CD4-positive, alpha-beta memory T cell (primary cell): ENCODE measurements at regions of chr1 and their contacts with region 1.

Region 1: DNA sequence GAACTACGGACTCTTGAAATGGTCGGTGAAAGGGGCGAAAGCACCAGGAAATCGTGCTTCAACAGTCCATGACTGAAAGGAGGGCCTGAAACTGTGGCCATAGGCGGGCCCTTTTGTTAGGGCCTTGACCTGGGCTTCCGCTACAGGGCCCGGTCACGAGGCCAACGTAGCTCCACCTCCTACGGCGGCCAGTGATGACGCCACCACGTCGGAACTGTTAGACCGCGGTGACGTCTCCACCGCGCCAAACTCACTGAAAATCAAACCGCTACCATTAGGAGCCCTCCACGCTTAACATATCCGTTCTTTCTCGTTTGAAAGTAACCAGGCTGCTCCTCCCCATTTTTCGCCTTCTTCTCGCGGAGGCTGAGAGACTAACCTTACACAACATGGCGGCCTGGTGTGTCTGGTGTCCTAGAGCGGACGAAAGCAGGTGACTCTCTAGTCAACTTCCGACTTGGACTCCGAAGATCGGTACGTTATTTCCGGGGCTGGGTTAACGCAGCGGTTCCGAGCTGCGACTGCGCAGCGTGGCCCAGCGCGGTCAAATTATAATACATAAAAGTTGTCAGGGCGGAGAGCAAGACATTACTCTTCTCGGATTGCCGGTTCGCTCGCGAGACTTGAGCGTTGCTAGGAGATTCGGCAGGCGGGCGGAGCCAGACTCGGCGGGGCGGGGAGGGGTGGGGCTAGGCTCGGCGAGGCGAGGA is 376 bp upstream of the CACYBP start:
- DNase-seq: peak; percentile 97 to 99 (median 99)
- H3K4me3 ChIP-seq: peak overlapping the region; percentile 42 to 63
- H3K4me3 Mint-ChIP-seq: no peak overlapping the region
- H3K27ac ChIP-seq: peak overlapping the region; percentile 99
- H3K27ac Mint-ChIP-seq: no peak overlapping the region
- H3K4me1 ChIP-seq: peaks cover 52% of the 10 kb centered on the region
- H3K4me1 Mint-ChIP-seq: peaks cover 24 to 43% (median 37%) of the 10 kb centered on the region in 4 donors
- H3K27me3 ChIP-seq: no peaks in the 10 kb centered on the region
- H3K27me3 Mint-ChIP-seq: no peaks in the 10 kb centered on the region

Region 2: GRCh38 chr1:173476664-173477285 is 1522.6 kb before region 1 on chr1:
- CTCF ChIA-PET with region 1: no interaction called
- POLR2A ChIA-PET with region 1: interaction called, 8 read pairs
- intact Hi-C with region 1: loop called (anchors 10 kb)
- DNase-seq: peak; percentile 77 to 90 (median 84)
- H3K4me3 ChIP-seq: peak overlapping the region; percentile 93
- H3K4me3 Mint-ChIP-seq: peak overlapping the region; percentile 89 to 94 (median 91)
- H3K27ac ChIP-seq: peak overlapping the region; percentile 89
- H3K27ac Mint-ChIP-seq: peak overlapping the region; percentile 89 to 95 (median 91)
- H3K4me1 ChIP-seq: peaks cover 61% of the 10 kb centered on the region
- H3K4me1 Mint-ChIP-seq: peaks cover 38 to 68% (median 55%) of the 10 kb centered on the region in 4 donors
- H3K27me3 ChIP-seq: no peaks in the 10 kb centered on the region
- H3K27me3 Mint-ChIP-seq: no peaks in the 10 kb centered on the region

Region 3: DNA sequence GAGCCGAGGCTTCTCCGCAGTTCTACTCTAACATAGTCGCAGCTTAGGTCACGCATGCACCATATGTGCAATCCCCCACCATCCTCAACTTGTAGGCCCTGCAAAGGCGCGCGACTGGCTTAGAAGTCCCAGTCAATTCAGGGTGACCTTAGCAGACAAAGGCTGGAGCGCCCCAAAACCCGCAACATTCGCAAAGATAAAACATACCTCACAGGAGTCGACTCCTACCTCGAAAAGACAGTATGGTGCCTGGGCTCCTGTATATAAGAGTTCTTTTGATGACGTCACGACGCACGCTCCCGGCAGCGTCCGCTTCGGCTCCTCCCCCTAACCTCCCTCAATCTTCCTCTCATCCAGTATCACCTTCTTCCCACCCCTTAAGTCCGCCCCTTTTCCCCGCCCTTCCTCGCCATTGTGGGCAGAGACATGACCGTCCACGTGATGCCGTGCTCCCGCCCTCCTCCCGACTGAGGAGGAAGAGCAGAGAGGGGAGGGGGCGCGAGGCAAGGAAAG is 1131.6 kb before region 1 on chr1 and contains the start of gene GAS5:
- CTCF ChIA-PET with region 1: no interaction called
- POLR2A ChIA-PET with region 1: interaction called, 40 read pairs
- intact Hi-C with region 1: loop called (anchors 1 kb)
- DNase-seq: peak; percentile 98 to 100 (median 99)
- H3K4me3 ChIP-seq: peak within 1 kb of the TSS; percentile 71 to 79
- H3K4me3 Mint-ChIP-seq: peak within 1 kb of the TSS; percentile 95 to 99 (median 96)
- H3K27ac ChIP-seq: peak within 1 kb of the TSS; percentile 89
- H3K27ac Mint-ChIP-seq: peak within 1 kb of the TSS; percentile 94 to 99 (median 97)
- H3K4me1 ChIP-seq: peaks cover 84% of the 10 kb centered on the region
- H3K4me1 Mint-ChIP-seq: peaks cover 52 to 92% (median 63%) of the 10 kb centered on the region in 4 donors
- H3K27me3 ChIP-seq: no peaks in the 10 kb centered on the region
- H3K27me3 Mint-ChIP-seq: no peaks in the 10 kb centered on the region
- total RNA-seq, gene GAS5: 676 to 709 TPM

Region 4: DNA sequence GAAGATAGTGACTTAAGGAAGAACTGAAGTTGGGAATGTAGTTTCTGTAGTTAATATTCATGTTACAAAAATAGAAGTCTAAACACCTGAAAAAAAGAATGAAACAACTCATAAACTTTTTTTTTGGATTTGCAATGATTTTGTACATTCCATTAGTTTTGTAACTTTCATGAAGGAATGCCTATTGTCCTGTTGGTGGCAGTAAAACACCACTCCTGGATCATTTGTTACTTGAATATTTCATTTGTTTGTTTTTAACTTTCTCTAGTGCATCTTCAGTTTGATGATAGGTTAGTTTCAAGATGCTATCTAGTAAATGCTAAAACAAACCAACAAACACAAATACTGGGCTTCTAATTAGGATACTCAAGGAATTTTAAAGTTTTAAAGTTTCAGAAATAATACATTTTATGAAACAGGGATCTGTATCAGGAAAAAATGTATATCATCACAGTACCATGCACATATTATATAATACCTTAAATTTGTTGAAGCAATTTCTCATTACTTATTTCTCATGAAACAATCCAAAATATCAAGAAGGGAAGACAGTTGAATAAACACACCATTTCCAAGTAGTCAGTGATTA is 229.3 kb before region 1 on chr1:
- CTCF ChIA-PET with region 1: interaction called, 8 read pairs
- POLR2A ChIA-PET with region 1: interaction called, 10 read pairs
- intact Hi-C with region 1: loop called (anchors 1 kb)
- DNase-seq: peak; percentile 34 to 55 (median 44)
- H3K4me3 ChIP-seq: no peak overlapping the region
- H3K4me3 Mint-ChIP-seq: no peak overlapping the region
- H3K27ac ChIP-seq: no peak overlapping the region
- H3K27ac Mint-ChIP-seq: no peak overlapping the region
- H3K4me1 ChIP-seq: no peaks in the 10 kb centered on the region
- H3K4me1 Mint-ChIP-seq: peaks cover 0 to 5% (median 2%) of the 10 kb centered on the region in 4 donors
- H3K27me3 ChIP-seq: no peaks in the 10 kb centered on the region
- H3K27me3 Mint-ChIP-seq: no peaks in the 10 kb centered on the region

Region 5: DNA sequence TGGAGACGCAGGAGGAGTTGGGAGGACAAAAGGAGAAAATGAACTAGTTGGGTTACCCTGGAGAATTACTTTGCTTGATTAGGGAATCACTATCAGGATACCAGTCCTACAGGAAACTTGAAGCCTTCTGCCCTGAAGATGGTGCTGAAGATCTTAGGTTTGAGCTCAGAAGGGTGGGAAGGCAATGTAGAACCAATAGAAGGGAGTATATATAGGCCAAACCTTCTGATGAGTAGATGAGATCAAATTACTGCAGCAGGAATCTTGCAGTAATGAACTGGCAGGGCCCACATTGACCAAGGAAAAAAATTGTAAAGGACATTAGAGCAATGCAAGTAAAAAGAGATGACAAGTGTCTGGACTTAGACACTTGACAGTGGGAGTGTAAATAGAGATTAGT is 116.0 kb before region 1 on chr1:
- CTCF ChIA-PET with region 1: interaction called, 17 read pairs
- POLR2A ChIA-PET with region 1: interaction called, 14 read pairs
- intact Hi-C with region 1: loop called (anchors 1 kb)
- DNase-seq: peak in 3 of 5 donors; percentile 10 to 25 (median 12)
- H3K4me3 ChIP-seq: no peak overlapping the region
- H3K4me3 Mint-ChIP-seq: no peak overlapping the region
- H3K27ac ChIP-seq: no peak overlapping the region
- H3K27ac Mint-ChIP-seq: peak overlapping the region in 5 of 7 donors; percentile 0 to 87 (median 62)
- H3K4me1 ChIP-seq: peaks cover 6% of the 10 kb centered on the region
- H3K4me1 Mint-ChIP-seq: peaks cover 0 to 13% (median 8%) of the 10 kb centered on the region in 4 donors
- H3K27me3 ChIP-seq: no peaks in the 10 kb centered on the region
- H3K27me3 Mint-ChIP-seq: no peaks in the 10 kb centered on the region

Region 6: DNA sequence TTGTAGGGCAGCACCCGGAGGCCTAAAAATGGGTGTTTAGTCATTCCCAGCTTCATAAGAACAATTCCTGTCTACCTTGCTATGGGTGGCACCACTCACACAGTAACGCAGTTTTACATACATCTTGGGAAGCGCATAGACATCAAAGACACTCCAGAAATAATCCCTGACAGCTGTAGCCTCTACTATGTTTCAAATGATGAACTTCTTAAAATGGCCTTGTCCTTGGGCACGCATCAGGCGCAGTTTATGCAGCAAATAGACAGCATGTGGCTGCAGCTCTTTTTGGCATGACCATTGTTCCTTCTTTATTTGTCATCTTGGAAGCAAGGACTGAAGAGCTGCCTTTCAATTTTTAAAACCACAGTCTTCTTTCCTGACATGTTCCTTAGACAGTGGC is 77.2 kb before region 1 on chr1:
- CTCF ChIA-PET with region 1: no interaction called
- POLR2A ChIA-PET with region 1: no interaction called
- intact Hi-C with region 1: no loop called
- DNase-seq: no peak
- H3K4me3 ChIP-seq: no peak overlapping the region
- H3K4me3 Mint-ChIP-seq: no peak overlapping the region
- H3K27ac ChIP-seq: no peak overlapping the region
- H3K27ac Mint-ChIP-seq: no peak overlapping the region
- H3K4me1 ChIP-seq: no peaks in the 10 kb centered on the region
- H3K4me1 Mint-ChIP-seq: peaks cover under 1 to 11% (median 3%) of the 10 kb centered on the region in 4 donors
- H3K27me3 ChIP-seq: no peaks in the 10 kb centered on the region
- H3K27me3 Mint-ChIP-seq: no peaks in the 10 kb centered on the region

Region 7: GRCh38 chr1:174982971-174983689 is 16.2 kb before region 1 on chr1:
- CTCF ChIA-PET with region 1: interaction called, 55 read pairs
- POLR2A ChIA-PET with region 1: interaction called, 66 read pairs
- intact Hi-C with region 1: loop called (anchors 1 kb)
- DNase-seq: peak; percentile 59 to 70 (median 62)
- H3K4me3 ChIP-seq: no peak overlapping the region
- H3K4me3 Mint-ChIP-seq: no peak overlapping the region
- H3K27ac ChIP-seq: no peak overlapping the region
- H3K27ac Mint-ChIP-seq: peak overlapping the region in 5 of 7 donors; percentile 44 to 75 (median 59)
- H3K4me1 ChIP-seq: peaks cover 4% of the 10 kb centered on the region
- H3K4me1 Mint-ChIP-seq: peaks cover 13 to 28% (median 21%) of the 10 kb centered on the region in 4 donors
- H3K27me3 ChIP-seq: no peaks in the 10 kb centered on the region
- H3K27me3 Mint-ChIP-seq: no peaks in the 10 kb centered on the region

Region 8: GRCh38 chr1:175192630-175193526 is 193.5 kb after region 1 on chr1 and contains the start of gene KIAA0040:
- CTCF ChIA-PET with region 1: no interaction called
- POLR2A ChIA-PET with region 1: interaction called, 20 read pairs
- intact Hi-C with region 1: no loop called
- DNase-seq: peak; percentile 49 to 66 (median 51)
- H3K4me3 ChIP-seq: peak within 1 kb of the TSS; percentile 85 to 91
- H3K4me3 Mint-ChIP-seq: peak within 1 kb of the TSS; percentile 92 to 99 (median 98)
- H3K27ac ChIP-seq: peak within 1 kb of the TSS; percentile 75
- H3K27ac Mint-ChIP-seq: peak within 1 kb of the TSS; percentile 92 to 98 (median 96)
- H3K4me1 ChIP-seq: peaks cover 51% of the 10 kb centered on the region
- H3K4me1 Mint-ChIP-seq: peaks cover 39 to 76% (median 51%) of the 10 kb centered on the region in 4 donors
- H3K27me3 ChIP-seq: no peaks in the 10 kb centered on the region
- H3K27me3 Mint-ChIP-seq: no peaks in the 10 kb centered on the region
- total RNA-seq, gene KIAA0040: 28.7 to 33.6 TPM